ENCODE measurements at regions of chr5 and their contacts with region 1.

Region 1: GRCh38 chr5:150129813-150130492 is 25.7 kb downstream of the PDGFRB start:
- ATAC-seq: peak; percentile 74 to 95 (median 82)
- H3K4me3 ChIP-seq: no peak overlapping the region
- H3K27ac ChIP-seq: no peak overlapping the region
- H3K4me1 ChIP-seq: peaks cover 5 to 10% of the 10 kb centered on the region in 2 donors

Region 2: DNA sequence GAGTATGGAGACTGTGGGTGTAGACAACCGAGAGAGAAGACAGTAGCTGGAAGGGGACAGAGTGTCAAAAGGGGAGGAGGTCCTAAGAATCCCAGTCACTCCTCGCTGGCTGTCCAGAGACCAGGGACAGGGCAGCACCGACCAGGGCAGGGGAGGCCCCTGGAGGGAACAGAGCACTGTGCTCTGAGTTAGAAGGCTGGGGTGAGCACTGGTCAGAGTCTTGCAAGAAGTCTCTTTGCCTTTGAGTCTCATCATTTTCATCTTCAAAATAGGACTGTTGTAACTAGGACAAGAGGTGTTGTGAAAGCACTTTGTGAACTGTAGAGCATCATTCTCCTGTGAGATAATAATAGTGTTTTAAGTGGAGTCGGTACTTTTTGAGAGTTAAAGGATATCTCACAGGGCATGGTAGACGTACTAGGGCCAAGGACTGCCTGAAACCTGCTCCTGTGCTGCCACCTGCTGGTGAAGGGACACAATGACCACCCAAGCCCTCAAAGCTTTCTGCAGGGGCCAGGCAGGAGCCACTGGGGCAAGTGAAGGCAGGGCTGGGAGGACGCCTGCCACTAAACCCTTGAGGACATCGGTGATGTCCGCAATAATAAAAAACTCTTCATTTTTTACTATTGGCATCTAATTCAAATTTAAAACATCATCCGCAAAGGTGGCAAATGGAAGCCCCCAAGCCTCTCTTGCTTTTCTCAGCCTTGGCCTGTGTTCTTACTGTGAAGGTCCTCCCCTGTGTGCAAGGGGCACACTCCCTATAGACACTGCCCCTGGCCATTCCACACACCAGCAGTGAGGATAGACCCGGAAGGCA is 88.1 kb after region 1 on chr5:
- in situ Hi-C with region 1: loop called in 2 of 9 experiments (anchors 10 kb)
- ATAC-seq: peak; percentile 40 to 96 (median 94)
- H3K4me3 ChIP-seq: no peak overlapping the region
- H3K27ac ChIP-seq: no peak overlapping the region
- H3K4me1 ChIP-seq: no peaks in the 10 kb centered on the region

Region 3: GRCh38 chr5:150227606-150228273 is 97.8 kb after region 1 on chr5:
- in situ Hi-C with region 1: loop called in 1 of 9 experiments (anchors 10 kb)
- ATAC-seq: peak in 3 of 8 experiments; percentile 84 to 89 (median 88)
- H3K4me3 ChIP-seq: no peak overlapping the region
- H3K27ac ChIP-seq: no peak overlapping the region
- H3K4me1 ChIP-seq: no peaks in the 10 kb centered on the region

Measured in motor neuron (in vitro differentiated cells).